Activated CD4-positive, alpha-beta T cell treated with anti-CD3 and anti-CD28 coated beads, Interleukin-2, amount 10 ng/mL, durations not matched to agents 24 days and 14 days (primary cell): ENCODE measurements at regions of chr9 and their contacts with region 1.

Region 1: GRCh38 chr9:114906908-114907571 is 23.4 kb downstream of the TNFSF8 start:
- DNase-seq: peak; percentile 78
- H3K4me3 Mint-ChIP-seq: peak overlapping the region; percentile 65
- H3K27ac Mint-ChIP-seq: peak overlapping the region; percentile 94
- H3K4me1 Mint-ChIP-seq: peaks cover 92% of the 10 kb centered on the region
- H3K27me3 Mint-ChIP-seq: no peaks in the 10 kb centered on the region

Region 2: GRCh38 chr9:114348906-114349482 is 558.0 kb before region 1 on chr9:
- intact Hi-C with region 1: no loop called
- DNase-seq: peak; percentile 87
- H3K4me3 Mint-ChIP-seq: peak overlapping the region; percentile 58
- H3K27ac Mint-ChIP-seq: peak overlapping the region; percentile 99
- H3K4me1 Mint-ChIP-seq: peaks cover 51% of the 10 kb centered on the region
- H3K27me3 Mint-ChIP-seq: no peaks in the 10 kb centered on the region

Region 3: DNA sequence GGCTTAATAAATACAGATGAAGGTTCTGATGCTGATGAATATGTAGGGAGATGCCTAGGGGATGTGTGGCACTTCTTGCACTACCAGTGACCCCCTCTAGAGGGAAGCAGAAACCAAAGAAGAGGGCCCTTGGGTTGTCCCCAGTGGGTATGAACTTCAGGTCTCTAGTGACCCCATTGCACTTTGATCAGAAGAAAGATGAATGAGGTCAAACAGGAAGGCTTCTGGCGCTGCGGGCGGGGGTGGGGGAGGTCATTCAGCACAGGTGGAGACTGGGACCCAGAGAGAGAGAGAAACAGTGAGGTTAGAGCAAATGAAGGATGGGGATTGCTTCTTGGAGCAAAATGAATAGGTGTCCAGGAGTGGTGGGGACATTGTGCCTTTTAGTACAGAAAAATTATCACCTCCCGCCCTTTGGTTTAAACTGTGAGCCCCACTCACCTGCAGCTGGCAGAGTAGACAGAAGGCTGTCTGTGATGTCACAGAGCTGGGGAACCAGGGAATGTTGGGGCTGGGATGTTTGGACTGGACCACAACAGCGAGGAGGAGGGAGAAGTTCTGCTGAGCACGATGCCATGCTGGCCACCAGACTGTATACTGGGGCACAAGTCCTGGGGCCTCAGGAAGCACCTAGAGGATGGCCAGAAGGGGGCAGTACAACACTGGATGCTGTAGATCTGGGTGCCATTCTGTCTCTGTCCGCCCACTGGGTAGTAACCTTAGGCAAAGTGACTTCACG is 225.3 kb before region 1 on chr9 and contains the start of gene TEX48:
- intact Hi-C with region 1: loop called (anchors 1 kb)
- DNase-seq: peak; percentile 95
- H3K4me3 Mint-ChIP-seq: peak within 1 kb of the TSS; percentile 39
- H3K27ac Mint-ChIP-seq: peak within 1 kb of the TSS; percentile 97
- H3K4me1 Mint-ChIP-seq: peaks cover 66% of the 10 kb centered on the region
- H3K27me3 Mint-ChIP-seq: no peaks in the 10 kb centered on the region
- total RNA-seq, gene TEX48: 0.52 and 0.56 TPM in 2 replicates

Region 4: DNA sequence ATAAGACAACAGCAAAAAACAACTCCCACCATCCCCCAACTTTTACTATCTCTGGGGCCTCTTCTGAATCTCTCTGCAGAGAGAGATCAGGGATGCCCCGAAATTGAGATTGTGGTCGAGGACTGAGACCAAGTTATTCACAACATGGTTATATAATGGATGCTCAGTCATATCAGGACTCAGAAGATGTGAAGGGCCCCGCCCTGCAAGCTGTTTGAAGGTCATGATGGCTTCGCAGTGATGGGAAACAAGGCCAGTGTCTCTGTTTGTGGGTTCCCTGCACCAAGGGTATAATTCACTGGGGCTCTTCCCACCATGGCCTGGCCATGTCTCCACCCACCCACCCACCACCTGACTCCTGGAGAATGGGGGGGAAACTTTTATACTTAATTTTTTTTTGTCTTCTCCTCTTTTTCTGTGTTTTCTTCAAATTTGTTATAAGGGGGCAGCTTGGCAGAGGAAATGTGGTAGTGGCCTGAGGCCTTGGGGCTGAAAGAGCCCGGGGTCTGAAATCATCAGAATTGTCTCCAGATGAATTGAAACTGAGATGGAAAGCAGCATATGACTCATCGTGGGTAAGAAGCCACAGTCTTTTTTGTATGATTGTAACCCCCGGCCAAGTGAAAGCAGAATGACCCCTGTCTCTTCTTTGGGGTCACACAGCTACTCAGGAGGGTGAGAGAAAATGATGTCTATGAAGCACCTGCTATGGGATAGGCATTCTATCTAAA is 210.1 kb before region 1 on chr9:
- intact Hi-C with region 1: loop called (anchors 1 kb)
- DNase-seq: peak; percentile 92
- H3K4me3 Mint-ChIP-seq: peak overlapping the region; percentile 79
- H3K27ac Mint-ChIP-seq: peak overlapping the region; percentile 100
- H3K4me1 Mint-ChIP-seq: peaks cover 79% of the 10 kb centered on the region
- H3K27me3 Mint-ChIP-seq: no peaks in the 10 kb centered on the region

Region 5: GRCh38 chr9:114805670-114806525 is 101.1 kb before region 1 on chr9 and contains the start of gene TNFSF15:
- intact Hi-C with region 1: no loop called
- DNase-seq: peak; percentile 80
- H3K4me3 Mint-ChIP-seq: peak within 1 kb of the TSS; percentile 79
- H3K27ac Mint-ChIP-seq: peak within 1 kb of the TSS; percentile 39
- H3K4me1 Mint-ChIP-seq: peaks cover 48% of the 10 kb centered on the region
- H3K27me3 Mint-ChIP-seq: peaks cover 17% of the 10 kb centered on the region
- total RNA-seq, gene TNFSF15: 1.4 and 1.5 TPM in 2 replicates

Region 6: DNA sequence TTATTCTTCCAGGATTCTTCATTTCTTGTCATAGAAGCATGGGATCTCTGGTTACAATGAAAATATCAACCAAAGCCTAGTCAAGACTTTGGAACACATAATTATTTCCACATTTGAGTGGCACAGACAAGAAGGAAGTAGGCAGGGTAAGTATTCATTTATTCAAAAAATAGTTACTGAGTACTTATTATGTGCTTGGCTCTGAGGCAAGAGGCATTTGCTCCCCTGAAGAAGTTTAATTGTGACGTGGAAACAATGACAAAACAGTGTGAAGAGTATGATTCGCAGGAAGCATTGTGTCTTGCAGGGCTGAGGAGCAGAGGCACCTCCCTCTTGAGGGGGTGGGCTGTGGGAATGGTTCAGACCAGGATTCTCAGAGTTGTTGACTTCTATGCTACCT is 56.2 kb before region 1 on chr9:
- intact Hi-C with region 1: loop called (anchors 2 kb)
- DNase-seq: no peak
- H3K4me3 Mint-ChIP-seq: no peak overlapping the region
- H3K27ac Mint-ChIP-seq: peak overlapping the region; percentile 39
- H3K4me1 Mint-ChIP-seq: peaks cover 10% of the 10 kb centered on the region
- H3K27me3 Mint-ChIP-seq: no peaks in the 10 kb centered on the region

Region 7: DNA sequence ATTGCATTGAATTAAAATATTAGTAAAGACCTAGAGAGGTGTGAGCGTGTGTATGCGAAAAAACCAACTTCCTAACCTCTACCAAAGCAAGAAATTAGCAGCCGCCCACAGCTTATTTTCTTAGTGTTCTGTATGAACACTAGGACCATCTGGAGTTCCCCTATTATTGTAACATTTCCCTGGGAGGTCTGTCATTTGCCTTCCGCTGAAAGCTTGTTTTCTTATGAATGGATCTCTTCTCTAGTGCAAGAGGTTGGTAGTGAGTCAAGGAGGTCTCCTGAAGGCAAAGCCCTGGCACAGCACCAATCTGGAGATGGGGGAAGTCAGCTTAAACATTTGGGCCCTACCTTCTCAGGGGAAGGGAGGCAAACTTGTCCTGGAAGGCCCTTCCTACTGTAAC is 12.6 kb after region 1 on chr9:
- intact Hi-C with region 1: loop called (anchors 1 kb)
- DNase-seq: peak; percentile 56
- H3K4me3 Mint-ChIP-seq: peak overlapping the region; percentile 59
- H3K27ac Mint-ChIP-seq: peak overlapping the region; percentile 78
- H3K4me1 Mint-ChIP-seq: peaks cover 89% of the 10 kb centered on the region
- H3K27me3 Mint-ChIP-seq: no peaks in the 10 kb centered on the region

Region 8: DNA sequence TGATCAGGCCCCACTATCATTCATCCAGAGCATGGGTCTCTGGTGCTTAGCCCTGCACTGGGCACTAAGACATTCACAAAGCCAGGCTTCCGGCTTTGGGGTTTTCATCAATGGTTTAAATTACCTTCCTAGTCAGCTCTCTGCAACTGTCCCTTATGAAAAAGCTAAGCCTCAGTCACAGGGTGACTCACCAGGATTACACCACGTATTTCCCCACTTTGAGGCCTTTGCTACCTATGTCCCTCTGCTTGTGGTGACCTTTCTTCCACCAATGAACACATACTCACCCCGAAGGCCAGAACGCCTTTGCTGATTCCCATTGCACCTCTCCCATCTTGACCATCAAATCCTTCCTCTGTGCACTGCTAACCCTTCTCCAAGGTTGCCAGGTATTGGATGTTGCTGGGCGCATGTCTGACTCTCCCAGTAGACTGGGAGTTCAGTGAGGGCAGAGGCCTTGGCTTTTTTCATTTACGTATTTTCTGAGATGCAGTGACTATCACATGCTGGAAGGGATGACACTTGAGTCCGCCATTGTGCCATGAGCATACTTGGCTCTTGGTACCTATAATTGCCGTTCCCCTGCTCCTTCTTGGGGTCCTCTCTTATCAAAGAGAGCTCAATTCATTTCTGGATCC is 82.0 kb after region 1 on chr9:
- intact Hi-C with region 1: loop called (anchors 1 kb)
- DNase-seq: peak; percentile 79
- H3K4me3 Mint-ChIP-seq: peak overlapping the region; percentile 65
- H3K27ac Mint-ChIP-seq: peak overlapping the region; percentile 97
- H3K4me1 Mint-ChIP-seq: peaks cover 74% of the 10 kb centered on the region
- H3K27me3 Mint-ChIP-seq: no peaks in the 10 kb centered on the region

Region 9: DNA sequence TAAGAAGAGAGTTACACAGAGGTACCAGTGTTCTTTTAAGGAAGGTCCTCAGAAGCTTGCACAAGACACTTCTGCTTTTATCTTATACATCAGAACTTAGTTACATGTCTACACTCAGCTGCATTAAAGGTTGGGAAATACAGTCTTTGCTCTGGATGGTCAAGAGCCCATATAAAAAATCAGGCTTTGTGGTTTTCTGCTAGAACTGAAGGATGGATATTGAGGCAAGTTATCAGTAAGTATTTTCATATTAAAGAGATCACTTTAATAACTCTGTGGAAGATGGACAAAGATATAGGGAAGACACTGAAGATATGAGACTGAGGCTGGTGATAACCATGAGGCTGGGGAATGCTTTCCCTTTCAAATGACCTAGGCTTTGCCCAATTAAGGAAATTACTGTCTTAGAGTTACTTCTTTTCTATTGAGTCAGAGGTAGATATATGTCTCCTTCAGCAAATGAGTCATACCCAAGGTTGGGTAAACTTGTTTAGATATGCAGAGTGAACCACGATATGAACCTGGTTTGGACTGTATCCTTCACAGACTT is 297.9 kb after region 1 on chr9:
- intact Hi-C with region 1: loop called (anchors 5 kb)
- DNase-seq: no peak
- H3K4me3 Mint-ChIP-seq: no peak overlapping the region
- H3K27ac Mint-ChIP-seq: peak overlapping the region; percentile 51
- H3K4me1 Mint-ChIP-seq: peaks cover 37% of the 10 kb centered on the region
- H3K27me3 Mint-ChIP-seq: peaks cover 14% of the 10 kb centered on the region